Left lung (tissue), 14 donors: ENCODE measurements at regions of chr9 and their contacts with region 1.

Region 1: DNA sequence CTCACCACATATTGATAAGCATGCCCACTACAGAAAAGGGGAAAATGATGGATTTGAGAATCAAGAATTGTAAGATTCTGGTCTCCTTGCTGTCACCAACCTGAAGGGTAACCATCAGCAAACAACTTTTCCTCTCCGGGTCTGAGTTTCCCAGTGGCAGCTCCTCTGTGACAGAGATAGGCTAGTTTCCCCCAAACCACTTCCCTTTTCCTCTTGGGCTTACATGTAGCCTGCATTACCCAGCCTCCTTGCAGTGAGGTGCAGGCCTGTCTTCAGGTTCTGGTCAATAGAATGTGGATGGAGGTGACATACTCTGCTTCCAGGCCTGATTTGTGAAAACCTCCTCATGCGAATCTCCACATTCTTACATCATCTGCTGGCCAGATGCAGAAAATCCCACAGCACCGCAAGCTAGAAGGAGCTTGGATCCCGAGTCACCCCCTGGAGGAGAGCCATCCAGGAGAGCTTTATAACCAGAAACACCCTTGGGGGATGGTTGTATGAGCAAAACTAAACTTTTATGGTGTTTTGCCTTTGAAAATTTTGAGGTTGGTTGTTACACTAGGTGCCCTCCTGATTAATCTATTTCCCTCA is 206.1 kb downstream of the RGS3 start:
- DNase-seq: no peak
- ATAC-seq: no peak
- H3K4me3 ChIP-seq: no peak overlapping the region
- H3K27ac ChIP-seq: no peak overlapping the region
- H3K4me1 ChIP-seq: no peaks in the 10 kb centered on the region
- H3K27me3 ChIP-seq: no peaks in the 10 kb centered on the region
- CTCF ChIP-seq: no peak

Region 2: DNA sequence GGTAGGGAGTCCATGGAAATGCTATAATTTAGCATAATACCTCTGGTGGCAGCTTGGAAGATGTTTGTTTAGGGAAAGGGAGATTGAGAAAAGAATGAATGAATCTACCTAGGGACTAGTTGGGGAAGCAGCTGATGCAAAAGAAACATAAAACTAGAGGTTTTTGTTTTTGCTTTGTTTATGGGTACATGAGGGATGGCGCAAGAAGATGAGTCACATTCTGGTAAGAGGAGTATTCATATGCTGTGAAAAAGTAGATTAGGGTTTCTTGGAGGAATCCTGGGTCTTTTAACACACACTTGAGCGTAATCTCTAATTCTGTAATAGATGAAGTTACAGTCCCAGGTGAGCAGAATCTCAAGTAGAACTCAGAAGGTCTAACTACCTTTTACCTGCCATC is 242.0 kb before region 1 on chr9:
- intact Hi-C with region 1: loop called in 1 of 2 experiments (anchors 10 kb)
- DNase-seq: no peak
- ATAC-seq: no peak
- H3K4me3 ChIP-seq: no peak overlapping the region
- H3K27ac ChIP-seq: no peak overlapping the region
- H3K4me1 ChIP-seq: no peaks in the 10 kb centered on the region
- H3K27me3 ChIP-seq: no peaks in the 10 kb centered on the region
- CTCF ChIP-seq: no peak